ENCODE measurements at regions of chr3 and their contacts with region 1.

Region 1: GRCh38 chr3:146189519-146190173 is 28.7 kb upstream of the PLOD2 start:
- DNase-seq: no peak
- H3K4me3 ChIP-seq: no peak overlapping the region
- H3K27ac ChIP-seq: no peak overlapping the region
- H3K4me1 ChIP-seq: peaks cover 0 to 15% (median 14%) of the 10 kb centered on the region in 4 donors
- H3K27me3 ChIP-seq: no peaks in the 10 kb centered on the region
- CTCF ChIP-seq: peak; percentile 67 to 78 (median 68)
- EP300 ChIP-seq: no peak
- POLR2A ChIP-seq: no peak

Region 2: GRCh38 chr3:145776782-145777408 is 412.8 kb before region 1 on chr3:
- intact Hi-C with region 1: loop called (anchors 10 kb)
- DNase-seq: no peak
- H3K4me3 ChIP-seq: no peak overlapping the region
- H3K27ac ChIP-seq: no peak overlapping the region
- H3K4me1 ChIP-seq: no peaks in the 10 kb centered on the region
- H3K27me3 ChIP-seq: no peaks in the 10 kb centered on the region
- CTCF ChIP-seq: peak; percentile 48 to 69 (median 50)
- EP300 ChIP-seq: no peak
- POLR2A ChIP-seq: no peak

Measured in esophagus muscularis mucosa (tissue), 4 donors.